RWPE1 (cell line): ENCODE measurements at regions of chr20 and their contacts with region 1.

Region 1: DNA sequence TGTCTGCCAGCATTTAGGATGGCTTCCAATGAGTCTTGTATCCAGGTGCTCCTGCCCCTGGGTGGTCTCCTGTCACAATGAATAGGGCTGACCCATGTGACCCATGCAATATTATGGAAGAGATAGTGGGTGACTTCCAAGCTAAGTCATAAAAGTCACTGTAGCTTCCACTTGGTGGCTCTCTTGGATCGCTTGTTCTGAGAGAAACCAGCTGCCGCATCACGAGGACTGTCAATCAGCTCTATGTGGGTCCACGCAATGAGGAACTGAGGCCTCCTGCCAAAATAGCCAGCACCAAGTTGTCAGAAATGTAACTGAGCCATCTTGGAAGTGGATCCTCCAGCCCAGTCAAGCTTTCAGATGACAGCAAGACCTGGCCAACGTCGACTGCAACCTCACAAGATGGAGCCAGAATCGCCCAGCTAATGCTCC is 14.9 kb upstream of the MATN4 start:
- DNase-seq: no peak
- H3K27ac ChIP-seq: peak overlapping the region; percentile 38
- CTCF ChIP-seq: peak; percentile 71

Region 2: GRCh38 chr20:44819936-44820335 is 503.0 kb before region 1 on chr20:
- CTCF ChIA-PET with region 1: no interaction called
- POLR2A ChIA-PET with region 1: no interaction called
- DNase-seq: no peak
- H3K27ac ChIP-seq: no peak overlapping the region
- CTCF ChIP-seq: no peak

Region 3: GRCh38 chr20:45087097-45087790 is 235.7 kb before region 1 on chr20:
- CTCF ChIA-PET with region 1: no interaction called
- POLR2A ChIA-PET with region 1: no interaction called
- DNase-seq: no peak
- H3K27ac ChIP-seq: no peak overlapping the region
- CTCF ChIP-seq: no peak

Region 4: DNA sequence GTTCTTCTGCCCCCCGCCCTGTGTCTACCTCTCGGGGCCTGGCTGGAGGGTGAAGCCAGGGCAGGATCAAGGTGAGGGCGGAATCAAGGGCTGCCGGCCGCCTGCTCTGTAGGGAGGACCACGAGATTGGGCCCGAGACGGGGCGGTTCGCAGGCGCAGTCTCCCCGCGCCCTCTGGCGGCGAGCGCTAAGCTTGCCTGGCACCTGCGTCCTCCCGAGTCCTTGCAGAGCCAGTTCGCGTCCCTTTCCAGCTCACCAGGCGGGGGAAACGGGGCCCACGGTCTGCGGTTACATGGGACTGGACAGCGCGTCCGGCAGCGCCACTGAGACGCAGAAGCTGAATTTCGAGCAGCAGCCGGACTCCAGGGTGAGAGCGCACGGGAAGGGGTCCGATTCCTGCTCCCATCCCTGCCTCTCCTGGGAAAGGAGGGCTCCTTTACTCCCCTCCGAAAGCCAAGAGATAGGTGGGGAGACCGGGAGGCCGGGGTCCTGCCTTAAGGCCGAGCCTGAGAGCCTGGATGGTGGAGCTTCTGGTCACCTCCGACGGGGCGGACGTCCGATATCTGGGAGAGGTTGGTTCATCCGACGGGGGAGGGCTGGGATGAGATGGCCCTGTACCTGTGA is 11.3 kb before region 1 on chr20:
- CTCF ChIA-PET with region 1: interaction called, 15 read pairs
- POLR2A ChIA-PET with region 1: no interaction called
- DNase-seq: peak; percentile 79
- H3K27ac ChIP-seq: no peak overlapping the region
- CTCF ChIP-seq: peak; percentile 98

Region 5: GRCh38 chr20:45347936-45348778 is 25.2 kb after region 1 on chr20 and contains the start of gene SDC4:
- CTCF ChIA-PET with region 1: interaction called, 10 read pairs
- POLR2A ChIA-PET with region 1: interaction called, 11 read pairs
- DNase-seq: peak; percentile 99
- H3K27ac ChIP-seq: peak within 1 kb of the TSS; percentile 97
- CTCF ChIP-seq: no peak

Region 6: GRCh38 chr20:45362804-45363610 is 40.0 kb after region 1 on chr20 and contains the start of gene SYS1:
- CTCF ChIA-PET with region 1: interaction called, 26 read pairs
- POLR2A ChIA-PET with region 1: interaction called, 9 read pairs
- DNase-seq: peak; percentile 100
- H3K27ac ChIP-seq: peak within 1 kb of the TSS; percentile 90
- CTCF ChIP-seq: peak; percentile 100

Region 7: DNA sequence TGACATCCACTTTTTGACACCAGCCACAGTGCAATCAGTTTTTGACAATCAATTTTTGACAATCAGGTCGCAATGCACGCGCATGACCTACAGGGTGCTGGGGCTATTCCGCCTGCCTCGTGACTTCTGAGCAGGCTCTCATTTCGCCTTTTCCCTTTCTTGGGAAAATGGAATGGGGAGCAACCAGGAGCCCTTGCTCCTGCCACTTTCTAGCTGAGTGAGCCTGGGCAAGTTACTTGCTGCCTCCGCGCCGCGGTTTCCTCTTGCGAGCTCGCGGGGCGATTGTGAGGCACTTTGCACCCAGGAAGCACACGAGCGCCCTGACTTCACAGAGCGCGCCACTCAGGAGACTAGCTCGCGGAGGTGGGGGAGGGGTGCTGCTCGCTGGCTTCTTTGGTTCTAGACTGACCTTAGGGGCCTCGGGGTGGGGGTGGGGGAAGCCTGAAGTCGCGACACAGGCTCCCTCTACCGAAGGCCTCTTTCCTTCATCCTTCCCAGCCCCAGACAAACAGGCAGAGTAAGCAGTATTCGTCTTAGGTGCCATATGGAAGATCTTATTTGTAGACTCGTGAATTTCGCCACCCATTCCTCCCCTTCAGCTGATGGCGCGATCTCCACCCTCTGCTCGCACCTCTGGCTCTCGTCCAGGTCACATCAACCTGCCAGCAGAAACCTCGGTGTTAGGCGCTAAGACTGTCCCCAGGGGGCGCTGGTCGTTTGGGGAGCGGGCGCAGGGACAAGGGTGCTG is 50.6 kb after region 1 on chr20:
- CTCF ChIA-PET with region 1: interaction called, 13 read pairs
- POLR2A ChIA-PET with region 1: interaction called, 11 read pairs
- DNase-seq: peak; percentile 93
- H3K27ac ChIP-seq: peak overlapping the region; percentile 51
- CTCF ChIP-seq: peak; percentile 98

Region 8: DNA sequence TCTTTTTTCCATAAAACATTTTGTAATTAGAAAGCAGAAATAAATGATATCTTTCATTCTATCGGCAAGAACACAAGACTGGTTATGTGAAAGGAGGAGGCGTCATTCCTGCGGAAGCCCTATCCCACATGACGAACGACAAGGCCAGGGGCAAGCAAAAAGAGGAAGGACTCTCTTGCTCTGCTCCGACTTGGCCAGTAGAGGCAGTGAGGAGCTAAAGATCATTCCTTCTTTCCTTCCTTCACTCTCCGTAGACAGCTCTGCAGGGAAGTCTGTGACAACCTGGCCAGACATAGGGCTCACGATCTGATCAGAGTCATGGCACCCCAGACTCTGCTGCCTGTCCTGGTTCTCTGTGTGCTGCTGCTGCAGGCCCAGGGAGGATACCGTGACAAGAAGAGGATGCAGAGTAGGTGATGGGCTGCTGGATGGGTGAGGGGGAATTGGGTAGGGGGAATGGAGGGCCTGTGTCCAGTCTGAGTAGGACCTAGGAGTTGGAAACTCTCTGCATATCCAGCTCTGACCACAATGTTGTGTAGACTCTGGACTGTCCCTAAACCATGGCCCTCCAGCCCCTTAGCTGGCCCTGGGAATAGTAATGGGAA is 306.6 kb after region 1 on chr20 and contains the start of gene WFDC10A:
- CTCF ChIA-PET with region 1: no interaction called
- POLR2A ChIA-PET with region 1: no interaction called
- DNase-seq: peak; percentile 83
- H3K27ac ChIP-seq: no peak within 1 kb of the TSS
- CTCF ChIP-seq: peak; percentile 92